Naive thymus-derived CD8-positive, alpha-beta T cell (primary cell): ENCODE measurements at regions of chr12 and their contacts with region 1.

Region 1: DNA sequence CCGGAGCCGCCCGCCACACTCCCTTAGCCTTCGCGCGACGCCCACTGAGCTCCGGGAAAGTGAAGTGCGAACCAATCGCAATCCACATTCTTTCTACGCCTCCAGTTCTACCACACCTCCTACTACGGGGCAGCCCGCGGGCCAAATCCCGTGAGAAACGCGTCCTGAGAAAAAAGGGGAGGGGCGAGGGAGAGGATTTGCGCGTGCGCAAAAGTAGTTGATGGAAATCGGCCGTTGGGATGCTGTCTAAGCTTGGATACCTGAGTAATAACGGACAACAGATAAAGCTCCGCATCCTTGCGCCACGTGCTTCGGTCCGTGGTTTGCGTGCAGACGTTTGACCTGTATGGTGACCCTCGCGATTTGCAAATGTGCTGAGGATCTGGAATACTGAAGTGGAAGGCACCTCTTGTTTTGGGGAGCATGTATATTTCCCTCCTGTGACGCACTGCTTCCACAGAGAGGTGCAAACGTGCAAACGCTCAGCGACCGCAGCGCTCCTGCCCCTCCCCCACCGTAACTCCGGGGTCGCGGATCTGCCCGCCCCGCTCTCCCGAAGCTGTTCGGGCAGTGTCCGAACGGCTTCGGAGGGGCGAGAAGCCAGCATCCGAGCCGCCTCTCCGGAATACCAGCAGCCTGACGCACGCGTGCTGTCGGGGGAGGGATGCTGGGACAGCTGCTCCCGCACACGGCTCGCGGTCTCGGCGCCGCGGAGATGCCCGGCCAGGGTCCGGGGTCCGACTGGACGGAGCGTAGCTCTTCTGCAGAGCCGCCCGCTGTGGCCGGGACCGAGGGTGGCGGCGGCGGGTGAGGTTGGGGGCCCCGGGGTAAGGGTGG is at the starts of genes FAM216A and GPN3:
- DNase-seq: peak; percentile 85 to 99 (median 95)
- ATAC-seq: peak; percentile 85 to 86
- H3K4me3 Mint-ChIP-seq: peak within 1 kb of the TSS; percentile 87 to 100 (median 99)
- H3K27ac Mint-ChIP-seq: peak within 1 kb of the TSS; percentile 94 to 99 (median 96)
- H3K4me1 Mint-ChIP-seq: peaks cover 14 to 45% (median 43%) of the 10 kb centered on the region in 4 donors
- H3K27me3 Mint-ChIP-seq: no peaks in the 10 kb centered on the region
- polyA plus RNA-seq, gene FAM216A: 9.3 to 15.4 (median 11.1) TPM
- polyA plus RNA-seq, gene GPN3: 33.7 to 35.8 (median 34.4) TPM

Region 2: DNA sequence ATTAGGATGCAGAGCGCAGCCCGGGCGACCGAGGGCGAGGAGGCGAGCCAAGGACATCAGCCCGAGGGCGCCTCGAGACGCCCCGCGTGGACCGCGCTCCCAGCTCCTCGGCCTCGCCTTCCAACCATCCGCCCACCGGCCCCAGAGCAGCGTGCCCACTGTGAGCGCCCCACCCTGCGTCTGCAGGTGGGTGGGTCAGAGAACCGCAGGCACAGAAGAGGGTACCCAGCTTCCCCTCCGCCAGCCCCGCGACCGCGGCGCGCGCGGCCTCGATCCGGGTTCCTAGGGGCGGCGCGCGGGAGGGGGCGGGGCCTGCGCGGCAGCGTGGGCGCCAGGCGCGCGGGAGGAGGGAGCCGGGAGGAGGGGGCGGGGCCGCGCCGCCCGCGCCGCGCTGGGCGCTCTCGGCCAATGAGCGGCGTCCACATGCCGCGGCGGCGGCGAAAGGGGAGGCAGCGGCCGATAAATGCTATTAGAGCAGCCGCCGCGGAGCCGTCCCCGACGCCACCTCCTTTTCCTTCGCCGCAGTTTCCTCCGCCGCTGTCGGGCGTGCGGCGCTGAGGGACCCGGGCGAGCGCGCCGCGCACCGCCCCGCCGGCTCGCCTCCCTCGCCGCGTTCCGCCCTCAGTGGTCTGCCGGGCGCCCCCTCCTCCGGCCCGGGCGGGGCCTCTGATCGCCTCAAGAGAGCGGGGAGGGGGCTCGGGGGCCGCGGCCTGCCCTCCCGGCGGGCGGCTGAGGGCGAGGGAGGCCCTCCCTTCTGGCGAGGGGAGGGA is 187.5 kb before region 1 on chr12 and contains the start of gene ATP2A2:
- POLR2A ChIA-PET with region 1: interaction called, 10 read pairs
- DNase-seq: peak; percentile 83 to 94 (median 88)
- ATAC-seq: peak; percentile 85 to 88
- H3K4me3 Mint-ChIP-seq: peak within 1 kb of the TSS; percentile 89 to 95 (median 90)
- H3K27ac Mint-ChIP-seq: peak within 1 kb of the TSS; percentile 71 to 95 (median 92)
- H3K4me1 Mint-ChIP-seq: peaks cover 14 to 56% (median 51%) of the 10 kb centered on the region in 4 donors
- H3K27me3 Mint-ChIP-seq: peaks cover 0 to 1% (median 0%) of the 10 kb centered on the region in 5 donors
- polyA plus RNA-seq, gene ATP2A2: 1.7 to 2.0 (median 1.9) TPM

Region 3: DNA sequence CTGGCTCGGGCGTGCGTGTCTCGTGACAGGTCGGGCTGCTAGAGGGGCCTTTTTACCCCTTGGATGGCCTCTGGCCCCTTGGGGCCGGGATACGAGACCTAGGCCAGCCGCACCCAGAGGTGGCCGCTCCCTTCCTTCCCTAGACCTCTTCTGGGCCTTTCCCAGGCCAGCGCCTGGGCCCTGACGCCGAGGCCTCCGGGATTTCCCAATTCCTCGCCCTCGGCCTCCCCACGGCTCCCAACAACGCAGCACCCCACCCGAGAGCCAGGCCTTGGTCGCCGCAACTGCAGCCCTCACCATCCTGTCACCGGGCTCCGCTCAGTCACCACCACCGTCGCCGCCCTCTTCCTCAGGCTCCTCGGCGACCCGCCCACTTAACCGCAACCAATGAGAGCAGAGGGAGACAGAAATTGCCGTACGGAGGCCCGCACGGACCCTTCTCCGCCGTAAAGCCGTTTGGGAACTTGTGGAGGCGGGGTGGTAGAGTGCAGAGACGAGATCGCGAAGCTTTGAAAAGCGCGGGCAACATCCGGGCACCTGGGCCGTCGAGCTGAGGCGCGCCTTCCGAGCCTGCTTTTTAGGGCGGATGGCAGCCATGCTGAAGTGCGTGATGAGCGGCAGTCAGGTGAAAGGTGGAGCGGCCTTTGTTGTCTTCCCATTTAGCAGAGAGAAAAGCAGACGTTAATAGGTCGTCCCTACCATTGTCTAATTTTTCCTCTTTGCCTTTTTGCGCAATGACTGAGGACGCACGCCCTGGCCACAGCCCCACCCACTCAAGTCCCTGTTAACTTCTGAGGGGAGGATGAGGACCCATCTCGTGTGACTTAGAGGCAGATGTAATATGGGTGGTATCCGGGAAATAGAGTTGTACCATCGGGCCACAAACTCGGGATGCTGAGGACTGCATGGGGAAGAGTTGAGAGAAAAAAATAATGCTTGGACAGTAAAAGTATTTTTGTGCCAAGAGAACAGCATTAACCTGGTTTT is 33.6 kb after region 1 on chr12 and contains the starts of genes RAD9B and VPS29:
- POLR2A ChIA-PET with region 1: interaction called, 48 read pairs
- DNase-seq: peak; percentile 96 to 100 (median 99)
- ATAC-seq: peak; percentile 92 to 95
- H3K4me3 Mint-ChIP-seq: peak within 1 kb of the TSS; percentile 94 to 99 (median 96)
- H3K27ac Mint-ChIP-seq: peak within 1 kb of the TSS; percentile 92 to 99 (median 97)
- H3K4me1 Mint-ChIP-seq: peaks cover 16 to 45% (median 39%) of the 10 kb centered on the region in 4 donors
- H3K27me3 Mint-ChIP-seq: peaks cover 0 to 3% (median 0%) of the 10 kb centered on the region in 5 donors
- polyA plus RNA-seq, gene RAD9B: 0.89 to 1.3 (median 1.0) TPM
- polyA plus RNA-seq, gene VPS29: 128 to 167 (median 167) TPM

Region 4: GRCh38 chr12:110531741-110532333 is 63.4 kb after region 1 on chr12:
- POLR2A ChIA-PET with region 1: no interaction called
- DNase-seq: no peak
- ATAC-seq: peak in 1 of 2 donors; percentile 29
- H3K4me3 Mint-ChIP-seq: no peak overlapping the region
- H3K27ac Mint-ChIP-seq: peak overlapping the region in 6 of 10 donors; percentile 11 to 68 (median 27)
- H3K4me1 Mint-ChIP-seq: peaks cover 0 to 7% (median 7%) of the 10 kb centered on the region in 4 donors
- H3K27me3 Mint-ChIP-seq: no peaks in the 10 kb centered on the region

Region 5: GRCh38 chr12:110600254-110600653 is 131.8 kb after region 1 on chr12:
- POLR2A ChIA-PET with region 1: interaction called, 17 read pairs
- DNase-seq: peak in 3 of 10 donors; percentile 57 to 61 (median 60)
- ATAC-seq: peak; percentile 48 to 58
- H3K4me3 Mint-ChIP-seq: no peak overlapping the region
- H3K27ac Mint-ChIP-seq: peak overlapping the region in 6 of 10 donors; percentile 15 to 85 (median 35)
- H3K4me1 Mint-ChIP-seq: peaks cover 4 to 32% (median 10%) of the 10 kb centered on the region in 4 donors
- H3K27me3 Mint-ChIP-seq: no peaks in the 10 kb centered on the region

Region 6: GRCh38 chr12:110606253-110606611 is 137.8 kb after region 1 on chr12:
- POLR2A ChIA-PET with region 1: interaction called, 17 read pairs
- DNase-seq: no peak
- ATAC-seq: no peak
- H3K4me3 Mint-ChIP-seq: peak overlapping the region; percentile 77 to 94 (median 86)
- H3K27ac Mint-ChIP-seq: peak overlapping the region; percentile 88 to 98 (median 93)
- H3K4me1 Mint-ChIP-seq: peaks cover 0 to 51% (median 8%) of the 10 kb centered on the region in 4 donors
- H3K27me3 Mint-ChIP-seq: no peaks in the 10 kb centered on the region

Region 7: DNA sequence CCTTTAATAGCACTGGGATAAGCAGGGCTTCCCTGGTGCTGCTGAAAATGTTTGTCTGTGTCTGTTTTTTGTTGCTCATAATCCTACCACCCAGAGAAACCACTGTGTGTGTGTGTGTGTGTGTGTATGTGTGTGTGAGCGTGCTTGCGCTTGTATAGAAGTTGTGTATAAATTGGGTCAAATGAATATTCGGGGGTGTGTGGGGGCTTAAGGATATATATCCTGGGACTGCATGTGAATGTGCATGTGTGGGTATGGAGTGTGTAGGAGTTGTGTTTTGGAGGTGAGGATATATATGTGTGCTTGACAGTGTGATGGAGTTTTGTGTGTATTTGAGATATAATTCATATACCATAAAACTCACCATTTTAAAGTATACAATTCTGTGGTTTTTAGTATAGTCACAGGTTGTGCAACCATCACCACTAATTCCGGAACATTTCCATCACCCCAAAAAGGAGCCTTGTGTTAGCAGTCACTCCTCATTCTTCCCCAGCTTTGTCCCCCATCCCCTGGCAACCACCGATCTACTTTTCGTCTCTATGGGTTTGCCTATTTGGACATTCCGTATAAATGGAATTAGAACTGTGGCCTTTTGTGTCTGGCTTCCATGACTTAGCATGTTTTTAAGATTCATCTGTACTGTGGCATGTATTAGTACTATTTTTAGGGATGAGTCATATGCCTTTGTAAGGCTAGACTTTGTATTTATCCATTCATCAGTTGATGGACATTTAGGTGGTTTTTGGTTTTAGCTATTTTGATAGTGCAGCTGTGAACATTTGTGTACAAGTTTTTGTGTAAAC is 171.1 kb after region 1 on chr12:
- POLR2A ChIA-PET with region 1: no interaction called
- DNase-seq: no peak
- ATAC-seq: no peak
- H3K4me3 Mint-ChIP-seq: no peak overlapping the region
- H3K27ac Mint-ChIP-seq: peak overlapping the region in 1 of 10 donors; percentile 37
- H3K4me1 Mint-ChIP-seq: peaks cover 29 to 84% (median 39%) of the 10 kb centered on the region in 4 donors
- H3K27me3 Mint-ChIP-seq: no peaks in the 10 kb centered on the region